Caco-2 (cell line): ENCODE measurements at regions of chr19 and their contacts with region 1.

Region 1: GRCh38 chr19:6372594-6373095 is at the start of gene ALKBH7:
- DNase-seq: peak; percentile 97 to 99
- H3K4me3 ChIP-seq: peak within 1 kb of the TSS; percentile 97
- H3K4me3 Mint-ChIP-seq: peak within 1 kb of the TSS; percentile 96
- H3K27ac Mint-ChIP-seq: peak within 1 kb of the TSS; percentile 99
- H3K4me1 ChIP-seq: peaks cover 17% of the 10 kb centered on the region
- H3K4me1 Mint-ChIP-seq: peaks cover 6% of the 10 kb centered on the region
- H3K27me3 ChIP-seq: no peaks in the 10 kb centered on the region
- H3K27me3 Mint-ChIP-seq: no peaks in the 10 kb centered on the region
- CTCF ChIP-seq: no peak
- total RNA-seq, gene ALKBH7: 55.5 and 70.0 TPM in 2 replicates

Region 2: GRCh38 chr19:6125571-6125989 is 247.1 kb before region 1 on chr19:
- CTCF ChIA-PET with region 1: interaction called, 11 read pairs
- POLR2A ChIA-PET with region 1: no interaction called
- intact Hi-C with region 1: no loop called
- DNase-seq: peak; percentile 74 to 76
- H3K4me3 ChIP-seq: no peak overlapping the region
- H3K4me3 Mint-ChIP-seq: no peak overlapping the region
- H3K27ac Mint-ChIP-seq: no peak overlapping the region
- H3K4me1 ChIP-seq: no peaks in the 10 kb centered on the region
- H3K4me1 Mint-ChIP-seq: no peaks in the 10 kb centered on the region
- H3K27me3 ChIP-seq: no peaks in the 10 kb centered on the region
- H3K27me3 Mint-ChIP-seq: no peaks in the 10 kb centered on the region
- CTCF ChIP-seq: peak; percentile 90 to 92

Region 3: DNA sequence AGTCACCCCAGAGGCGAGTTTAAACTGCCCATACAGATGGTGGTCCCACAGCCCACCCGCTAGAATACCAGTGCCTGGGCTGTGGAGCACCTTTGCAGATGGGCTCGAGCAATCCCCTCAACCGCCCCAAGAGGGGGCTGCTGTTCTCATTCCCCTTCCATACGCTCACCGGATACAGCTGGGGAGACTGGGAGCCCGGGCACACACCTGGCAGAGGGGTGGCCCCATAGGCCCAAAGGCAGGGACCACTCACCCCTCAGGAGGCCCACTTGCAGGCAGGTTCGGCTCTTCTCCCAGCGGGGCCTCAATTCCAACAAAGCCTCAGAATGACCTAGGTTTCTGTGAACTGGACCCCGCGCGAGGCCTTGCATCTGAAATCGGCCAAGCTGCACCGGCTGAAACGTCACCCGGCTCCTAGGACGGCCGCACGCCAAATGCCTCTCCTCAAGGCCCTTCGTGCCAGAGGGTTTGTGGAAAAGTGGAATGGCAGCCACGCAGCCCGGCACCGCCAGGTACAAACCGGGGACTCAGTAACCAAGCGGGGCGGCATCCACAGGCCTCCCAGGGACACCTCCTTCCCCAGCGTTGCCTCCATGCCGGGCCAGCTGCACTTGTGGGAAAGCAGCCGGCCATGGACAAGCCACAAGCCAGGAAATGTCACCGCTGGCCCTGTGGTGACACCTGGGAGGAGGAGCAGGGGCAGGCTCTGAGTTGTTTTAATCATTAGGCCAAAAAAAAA is 111.6 kb before region 1 on chr19:
- CTCF ChIA-PET with region 1: interaction called, 11 read pairs
- POLR2A ChIA-PET with region 1: no interaction called
- intact Hi-C with region 1: no loop called
- DNase-seq: peak in 1 of 2 experiments; percentile 56
- H3K4me3 ChIP-seq: no peak overlapping the region
- H3K4me3 Mint-ChIP-seq: no peak overlapping the region
- H3K27ac Mint-ChIP-seq: no peak overlapping the region
- H3K4me1 ChIP-seq: no peaks in the 10 kb centered on the region
- H3K4me1 Mint-ChIP-seq: no peaks in the 10 kb centered on the region
- H3K27me3 ChIP-seq: no peaks in the 10 kb centered on the region
- H3K27me3 Mint-ChIP-seq: no peaks in the 10 kb centered on the region
- CTCF ChIP-seq: peak; percentile 60 to 67

Region 4: GRCh38 chr19:6362027-6362350 is 10.7 kb before region 1 on chr19:
- CTCF ChIA-PET with region 1: interaction called, 11 read pairs
- POLR2A ChIA-PET with region 1: interaction called, 24 read pairs
- intact Hi-C with region 1: loop called (anchors 1 kb)
- DNase-seq: no peak
- H3K4me3 ChIP-seq: peak overlapping the region; percentile 92
- H3K4me3 Mint-ChIP-seq: peak overlapping the region; percentile 79
- H3K27ac Mint-ChIP-seq: peak overlapping the region; percentile 64
- H3K4me1 ChIP-seq: no peaks in the 10 kb centered on the region
- H3K4me1 Mint-ChIP-seq: no peaks in the 10 kb centered on the region
- H3K27me3 ChIP-seq: no peaks in the 10 kb centered on the region
- H3K27me3 Mint-ChIP-seq: no peaks in the 10 kb centered on the region
- CTCF ChIP-seq: no peak

Region 5: DNA sequence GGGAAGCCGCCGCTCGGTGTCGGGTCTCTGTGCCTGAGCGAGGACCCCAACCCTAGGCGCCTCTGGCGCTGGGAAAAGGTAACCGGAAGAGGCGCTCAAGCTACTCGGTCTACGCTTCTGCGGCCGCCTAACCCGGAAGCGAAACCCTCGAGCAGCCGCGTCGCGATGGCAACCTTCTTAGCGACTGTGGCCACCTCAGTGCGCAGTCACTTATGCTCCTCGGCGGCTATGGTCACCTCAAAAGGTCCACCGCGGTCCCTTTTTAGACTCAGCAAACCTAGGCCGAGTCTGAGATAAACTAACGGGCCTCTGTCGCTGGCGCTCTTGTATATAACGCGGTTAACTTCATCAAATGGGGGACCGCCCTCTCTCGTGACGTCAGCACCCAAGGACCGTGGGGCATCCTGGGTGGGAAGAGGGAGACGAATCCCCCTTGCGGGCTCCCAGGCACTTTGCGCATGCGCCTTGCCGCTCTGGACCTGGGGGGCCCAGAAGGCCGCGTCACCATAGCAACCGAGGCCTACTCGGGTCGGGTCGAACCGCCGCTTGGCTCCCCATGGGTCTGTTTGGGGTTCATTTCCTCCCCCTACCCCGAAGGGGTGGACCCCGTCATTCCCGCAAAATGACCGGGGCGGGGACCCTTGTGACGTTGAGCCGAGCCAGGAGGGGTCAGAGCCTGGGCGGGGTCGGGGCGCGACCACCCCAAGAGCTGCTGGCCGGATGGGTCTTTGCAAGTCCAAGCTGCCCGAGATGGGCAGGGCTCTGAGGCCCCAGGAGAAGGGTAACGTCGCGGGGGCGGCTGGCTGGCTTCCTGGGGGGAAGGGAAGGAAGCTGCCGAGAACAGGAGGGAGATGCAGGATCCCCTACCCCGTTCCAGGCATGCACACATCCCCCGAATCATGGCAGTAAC is 20.7 kb after region 1 on chr19 and contains the start of gene GTF2F1:
- CTCF ChIA-PET with region 1: interaction called, 4 read pairs
- POLR2A ChIA-PET with region 1: interaction called, 8 read pairs
- intact Hi-C with region 1: loop called (anchors 2 kb)
- DNase-seq: peak; percentile 93 to 94
- H3K4me3 ChIP-seq: peak within 1 kb of the TSS; percentile 83
- H3K4me3 Mint-ChIP-seq: peak within 1 kb of the TSS; percentile 85
- H3K27ac Mint-ChIP-seq: peak within 1 kb of the TSS; percentile 88
- H3K4me1 ChIP-seq: peaks cover 5% of the 10 kb centered on the region
- H3K4me1 Mint-ChIP-seq: peaks cover 15% of the 10 kb centered on the region
- H3K27me3 ChIP-seq: no peaks in the 10 kb centered on the region
- H3K27me3 Mint-ChIP-seq: no peaks in the 10 kb centered on the region
- CTCF ChIP-seq: peak; percentile 14 to 34
- total RNA-seq, gene GTF2F1: 66.6 and 77.4 TPM in 2 replicates

Region 6: DNA sequence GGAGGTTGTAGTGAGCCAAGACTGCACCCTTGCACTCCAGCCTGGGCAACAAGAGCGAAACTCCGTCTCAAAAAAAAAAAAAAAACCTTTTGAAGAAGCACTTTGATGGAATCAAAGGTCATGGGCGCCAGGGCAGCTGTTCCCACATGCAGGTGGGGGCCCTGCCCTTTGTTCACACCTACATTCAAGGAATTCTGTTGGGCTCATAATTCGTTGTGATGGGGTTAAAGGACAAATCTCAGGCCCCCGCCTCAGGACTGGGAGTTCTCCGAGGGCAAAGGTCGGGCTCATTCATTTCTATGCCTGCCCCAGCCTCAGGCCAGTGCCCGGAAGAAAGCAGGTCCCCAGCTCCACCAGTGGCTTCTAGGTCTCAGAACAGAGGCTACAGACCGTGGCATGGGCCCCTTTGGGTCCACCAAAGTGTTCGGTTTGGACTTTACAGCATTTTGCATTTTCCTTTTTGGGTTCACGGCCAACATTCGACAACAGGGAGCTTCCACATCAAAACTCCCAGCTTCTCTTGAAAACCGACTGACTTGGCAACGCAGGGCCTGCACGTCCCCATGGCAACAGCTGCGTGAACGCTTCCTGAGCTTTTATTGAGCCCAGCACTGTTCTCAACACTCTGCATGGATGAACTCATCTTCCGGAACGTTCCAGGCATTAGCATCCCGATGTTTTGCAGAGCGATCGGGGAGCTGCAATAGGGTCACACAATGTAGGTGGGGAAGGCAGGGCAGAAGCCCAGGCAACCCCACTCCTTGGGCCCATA is 30.4 kb after region 1 on chr19:
- CTCF ChIA-PET with region 1: interaction called, 3 read pairs
- POLR2A ChIA-PET with region 1: interaction called, 20 read pairs
- intact Hi-C with region 1: loop called (anchors 1 kb)
- DNase-seq: peak; percentile 93 to 96
- H3K4me3 ChIP-seq: peak overlapping the region; percentile 30
- H3K4me3 Mint-ChIP-seq: peak overlapping the region; percentile 70
- H3K27ac Mint-ChIP-seq: peak overlapping the region; percentile 98
- H3K4me1 ChIP-seq: peaks cover 27% of the 10 kb centered on the region
- H3K4me1 Mint-ChIP-seq: peaks cover 6% of the 10 kb centered on the region
- H3K27me3 ChIP-seq: no peaks in the 10 kb centered on the region
- H3K27me3 Mint-ChIP-seq: no peaks in the 10 kb centered on the region
- CTCF ChIP-seq: no peak

Region 7: GRCh38 chr19:6476155-6476895 is 103.7 kb after region 1 on chr19:
- CTCF ChIA-PET with region 1: interaction called, 6 read pairs
- POLR2A ChIA-PET with region 1: interaction called, 12 read pairs
- intact Hi-C with region 1: loop called (anchors 1 kb)
- DNase-seq: peak; percentile 98 to 99
- H3K4me3 ChIP-seq: peak overlapping the region; percentile 47
- H3K4me3 Mint-ChIP-seq: peak overlapping the region; percentile 84
- H3K27ac Mint-ChIP-seq: peak overlapping the region; percentile 91
- H3K4me1 ChIP-seq: peaks cover 19% of the 10 kb centered on the region
- H3K4me1 Mint-ChIP-seq: peaks cover 9% of the 10 kb centered on the region
- H3K27me3 ChIP-seq: no peaks in the 10 kb centered on the region
- H3K27me3 Mint-ChIP-seq: no peaks in the 10 kb centered on the region
- CTCF ChIP-seq: no peak